ENCODE measurements at regions of chr9 and their contacts with region 1.

Region 1: GRCh38 chr9:89483592-89484522 is 14.1 kb downstream of the SEMA4D start:
- DNase-seq: peak in 2 of 10 donors; percentile 35 to 60
- H3K4me3 ChIP-seq: peak overlapping the region in 36 of 59 donors; percentile 8 to 52 (median 26)
- H3K27ac ChIP-seq: peak overlapping the region; percentile 14 to 95 (median 89)
- H3K27me3 ChIP-seq: no peaks in the 10 kb centered on the region
- CTCF ChIP-seq: no peak

Region 2: DNA sequence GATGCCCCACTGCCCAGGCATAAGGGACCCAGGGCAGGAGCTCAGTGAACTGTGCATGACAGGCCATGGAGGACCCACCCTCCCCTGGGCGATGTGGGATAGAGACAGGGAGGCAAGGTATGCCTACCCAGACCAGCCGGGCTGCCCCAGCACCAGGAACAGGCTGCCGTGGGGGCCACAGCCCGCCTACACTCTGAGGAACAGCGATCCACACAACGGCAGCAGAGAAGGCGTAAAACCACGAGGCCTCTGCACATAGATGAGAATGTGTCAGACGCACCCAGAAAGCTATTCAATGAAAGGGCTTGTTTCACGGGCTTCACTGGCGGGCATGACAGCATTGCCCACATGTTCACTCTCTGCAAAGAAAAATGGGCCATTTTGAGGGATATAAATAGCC is 35.5 kb before region 1 on chr9:
- intact Hi-C with region 1: loop called in 1 of 2 experiments (anchors 5 kb)
- DNase-seq: peak; percentile 20 to 95 (median 90)
- H3K4me3 ChIP-seq: peak overlapping the region in 7 of 59 donors; percentile 3 to 31 (median 11)
- H3K27ac ChIP-seq: peak overlapping the region; percentile 82 to 100 (median 96)
- H3K27me3 ChIP-seq: no peaks in the 10 kb centered on the region
- CTCF ChIP-seq: peak in 8 of 56 donors; percentile 8 to 27 (median 14)